BJ (cell line): ENCODE measurements at regions of chr3 and their contacts with region 1.

Region 1: DNA sequence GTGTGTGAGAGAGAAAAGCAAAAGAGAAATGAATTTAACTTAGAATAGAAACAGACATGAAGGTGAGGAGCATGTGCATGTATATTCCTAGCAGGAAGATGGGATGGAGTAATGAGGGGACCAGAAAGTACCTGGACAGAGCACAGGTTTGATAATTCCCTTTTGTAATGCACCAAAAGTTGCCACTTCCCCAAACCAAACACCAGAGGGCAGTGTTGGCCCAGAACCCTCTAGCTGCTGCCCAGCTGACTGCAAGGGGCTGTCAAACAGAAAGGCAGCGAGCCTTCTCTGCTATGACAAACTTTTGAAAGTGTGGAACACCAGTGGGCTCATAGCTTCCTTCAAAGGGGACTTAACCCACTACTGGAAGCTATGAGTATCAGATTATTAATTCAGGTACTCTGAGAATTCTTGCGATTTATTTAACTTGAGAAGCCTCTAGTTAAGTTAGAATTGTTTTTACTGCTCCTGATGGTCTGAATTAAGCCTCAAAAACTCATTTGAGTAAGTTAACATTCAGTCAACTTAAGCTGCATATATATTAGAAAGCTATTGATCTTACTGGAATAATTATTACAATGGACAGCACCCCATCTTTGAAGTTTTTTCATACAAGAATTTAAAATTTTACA is 234.9 kb downstream of the NEK10 start:
- DNase-seq: peak; percentile 11
- H3K4me3 ChIP-seq: no peak overlapping the region
- H3K27me3 ChIP-seq: no peaks in the 10 kb centered on the region
- CTCF ChIP-seq: peak; percentile 92

Region 2: DNA sequence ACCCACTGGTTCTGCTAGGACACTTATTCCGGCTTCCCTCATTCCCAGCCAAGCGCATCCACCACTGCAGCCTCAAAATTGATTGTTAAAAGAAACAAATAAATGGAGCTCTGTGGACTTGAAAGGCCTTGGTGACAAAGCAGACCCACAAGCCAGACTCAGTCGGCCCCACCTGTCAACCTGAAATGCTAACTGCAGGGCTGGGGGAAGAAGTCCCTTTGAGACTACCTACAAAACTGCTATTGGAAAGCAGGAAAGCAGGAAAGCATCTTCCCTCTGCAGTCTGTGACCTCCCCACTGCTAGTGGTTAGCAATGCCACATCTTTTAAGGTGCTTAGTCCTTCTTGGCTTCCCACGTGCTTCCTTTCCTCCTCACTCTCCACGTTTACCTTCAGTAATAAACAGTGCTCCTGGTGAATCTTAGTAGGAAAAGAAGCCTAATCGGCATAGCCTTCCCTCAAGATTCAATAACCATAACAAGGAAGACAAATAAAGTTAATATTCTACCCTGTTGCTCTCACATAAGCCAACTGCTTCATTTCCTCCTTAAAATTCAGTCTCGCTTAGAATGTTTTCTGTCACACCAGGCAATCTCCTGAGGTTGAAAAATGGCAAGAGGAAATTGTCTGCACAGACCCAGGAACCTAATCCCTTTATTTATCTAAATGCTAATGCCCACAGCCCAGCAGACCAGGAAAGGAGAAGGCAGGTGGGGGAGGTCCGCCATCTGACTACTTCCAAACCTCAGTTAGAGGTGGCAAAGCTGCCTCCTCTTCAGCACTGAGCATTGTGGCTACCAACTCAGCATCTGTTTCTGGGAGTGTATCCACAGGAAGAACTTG is 61.2 kb before region 1 on chr3:
- CTCF ChIA-PET with region 1: no interaction called
- POLR2A ChIA-PET with region 1: no interaction called
- DNase-seq: no peak
- H3K4me3 ChIP-seq: no peak overlapping the region
- H3K27me3 ChIP-seq: no peaks in the 10 kb centered on the region
- CTCF ChIP-seq: no peak

Region 3: DNA sequence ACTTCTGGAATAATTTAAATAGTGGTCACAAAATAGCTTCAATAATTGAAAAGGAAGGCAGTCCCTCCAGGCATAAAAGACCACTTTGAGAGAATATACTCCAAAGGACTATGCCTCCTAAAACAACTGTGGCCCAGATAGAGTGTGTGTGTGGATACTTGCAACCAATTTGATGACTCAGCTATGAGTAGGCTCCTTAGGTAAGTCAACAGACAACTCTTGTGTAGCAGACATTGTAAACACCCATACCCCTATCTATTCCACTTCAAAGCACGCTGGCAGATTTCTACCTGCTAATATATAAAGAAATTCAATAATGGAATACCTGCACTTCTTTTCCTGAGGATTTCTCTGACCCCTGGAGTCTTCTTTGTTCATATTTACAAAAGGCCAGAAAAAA is 19.6 kb before region 1 on chr3:
- CTCF ChIA-PET with region 1: no interaction called
- POLR2A ChIA-PET with region 1: no interaction called
- DNase-seq: no peak
- H3K4me3 ChIP-seq: no peak overlapping the region
- H3K27me3 ChIP-seq: no peaks in the 10 kb centered on the region
- CTCF ChIP-seq: no peak

Region 4: GRCh38 chr3:27244374-27244773 is 110.1 kb after region 1 on chr3:
- CTCF ChIA-PET with region 1: interaction called, 10 read pairs
- POLR2A ChIA-PET with region 1: no interaction called
- DNase-seq: no peak
- H3K4me3 ChIP-seq: no peak overlapping the region
- H3K27me3 ChIP-seq: no peaks in the 10 kb centered on the region
- CTCF ChIP-seq: no peak

Region 5: GRCh38 chr3:27279123-27279522 is 144.8 kb after region 1 on chr3:
- CTCF ChIA-PET with region 1: interaction called, 15 read pairs
- POLR2A ChIA-PET with region 1: no interaction called
- DNase-seq: no peak
- H3K4me3 ChIP-seq: no peak overlapping the region
- H3K27me3 ChIP-seq: no peaks in the 10 kb centered on the region
- CTCF ChIP-seq: 0 out of 2 replicates have a peak, but pooled peaks have one; percentile 39